ENCODE measurements at regions of chr22 and their contacts with region 1.

Region 1: DNA sequence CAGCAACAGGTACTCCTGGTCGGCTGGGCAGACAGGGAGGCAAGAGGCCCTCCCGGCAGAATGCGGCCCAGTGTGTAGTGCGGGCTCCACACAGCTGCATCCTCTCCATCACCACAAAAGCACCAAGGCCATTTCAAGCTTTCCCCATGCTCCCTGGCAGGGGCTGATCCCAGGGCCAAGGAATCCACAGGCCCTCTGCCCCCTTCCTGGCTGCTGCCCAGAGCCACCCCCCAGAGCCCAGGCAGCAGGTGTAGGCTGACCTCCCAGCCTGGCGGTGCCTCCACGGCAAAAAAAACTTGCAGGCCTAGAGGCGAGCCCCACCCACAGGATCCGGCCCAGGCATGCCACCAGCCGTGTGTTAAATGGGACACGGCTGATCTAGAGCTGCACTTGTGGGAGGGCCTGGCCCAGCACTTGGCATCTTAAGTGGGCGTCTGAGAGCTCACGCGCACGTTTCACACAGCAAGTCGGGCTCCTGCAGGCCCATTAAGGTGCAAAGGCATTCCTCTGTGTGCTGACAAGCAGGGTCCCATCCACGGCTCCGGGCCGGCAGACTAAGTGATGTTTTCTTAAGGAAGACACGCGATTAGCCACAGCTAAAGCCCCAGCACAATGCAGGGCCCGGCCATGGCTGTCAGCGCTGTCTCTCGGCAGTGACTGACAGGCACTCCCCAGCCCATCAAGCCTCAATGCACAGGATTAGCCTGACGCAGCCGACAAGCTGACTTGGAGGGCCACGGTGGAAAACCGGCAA is 19.8 kb upstream of the GNB1L start:
- DNase-seq: peak; percentile 31
- H3K4me3 ChIP-seq: no peak overlapping the region
- H3K27ac ChIP-seq: no peak overlapping the region; a peak in 1 of 4 replicates
- H3K4me1 ChIP-seq: peaks cover 12 to 24% of the 10 kb centered on the region in 2 experiments; a peak in 3 of 4 replicates
- H3K27me3 ChIP-seq: no peaks in the 10 kb centered on the region
- CTCF ChIP-seq: no peak
- EP300 ChIP-seq: no peak
- RAD21 ChIP-seq: no peak

Region 2: DNA sequence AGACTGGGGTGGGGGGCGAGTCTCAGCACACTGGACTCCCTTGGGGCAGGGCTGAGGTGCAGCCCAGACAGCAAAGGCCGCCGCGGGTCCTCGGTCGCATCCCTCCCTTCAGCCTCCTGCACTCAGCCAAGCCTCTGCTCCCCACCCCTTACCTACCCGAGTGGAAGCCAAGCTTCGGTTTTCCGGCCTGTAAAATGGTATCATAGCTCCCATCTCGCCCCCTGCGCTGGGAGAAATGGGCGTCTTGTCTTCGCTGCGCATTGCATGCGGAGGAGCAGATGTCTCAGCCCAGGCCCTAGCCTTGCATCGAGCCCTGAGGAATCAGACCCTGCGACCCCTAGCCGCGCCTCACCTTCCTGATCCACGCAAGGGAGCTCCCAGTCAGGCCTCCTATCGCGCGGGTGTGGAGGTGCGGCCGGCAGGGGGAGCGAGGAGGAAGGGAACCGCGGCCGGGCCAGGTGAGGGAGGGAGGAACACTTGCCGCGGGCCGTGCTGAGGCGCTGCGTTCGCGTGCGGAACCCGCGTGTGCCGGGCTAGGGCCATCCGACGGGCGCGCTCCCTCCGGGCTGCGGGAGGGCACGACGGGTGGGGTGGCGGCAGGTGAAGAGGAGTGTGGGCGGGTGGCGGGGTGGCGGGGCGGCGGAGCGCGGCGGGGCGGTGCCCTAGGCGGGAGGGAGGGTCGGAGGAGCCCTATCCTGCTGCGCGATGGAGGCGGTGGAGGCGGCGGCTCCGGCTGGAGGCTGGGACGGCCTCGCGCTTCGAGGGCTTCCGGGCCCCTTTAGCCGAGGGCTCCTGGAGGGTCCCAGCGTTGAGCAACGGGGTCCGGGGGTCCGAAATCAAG is 118.0 kb before region 1 on chr22:
- CTCF ChIA-PET with region 1: interaction called, 12 read pairs
- POLR2A ChIA-PET with region 1: no interaction called
- DNase-seq: peak; percentile 78
- H3K4me3 ChIP-seq: no peak overlapping the region
- H3K27ac ChIP-seq: no peak overlapping the region
- H3K4me1 ChIP-seq: peaks cover 0 to 6% of the 10 kb centered on the region in 2 experiments; a peak in 2 of 4 replicates
- H3K27me3 ChIP-seq: peaks cover 53% of the 10 kb centered on the region
- CTCF ChIP-seq: peak; percentile 47
- EP300 ChIP-seq: no peak
- RAD21 ChIP-seq: peak; percentile 46

Region 3: DNA sequence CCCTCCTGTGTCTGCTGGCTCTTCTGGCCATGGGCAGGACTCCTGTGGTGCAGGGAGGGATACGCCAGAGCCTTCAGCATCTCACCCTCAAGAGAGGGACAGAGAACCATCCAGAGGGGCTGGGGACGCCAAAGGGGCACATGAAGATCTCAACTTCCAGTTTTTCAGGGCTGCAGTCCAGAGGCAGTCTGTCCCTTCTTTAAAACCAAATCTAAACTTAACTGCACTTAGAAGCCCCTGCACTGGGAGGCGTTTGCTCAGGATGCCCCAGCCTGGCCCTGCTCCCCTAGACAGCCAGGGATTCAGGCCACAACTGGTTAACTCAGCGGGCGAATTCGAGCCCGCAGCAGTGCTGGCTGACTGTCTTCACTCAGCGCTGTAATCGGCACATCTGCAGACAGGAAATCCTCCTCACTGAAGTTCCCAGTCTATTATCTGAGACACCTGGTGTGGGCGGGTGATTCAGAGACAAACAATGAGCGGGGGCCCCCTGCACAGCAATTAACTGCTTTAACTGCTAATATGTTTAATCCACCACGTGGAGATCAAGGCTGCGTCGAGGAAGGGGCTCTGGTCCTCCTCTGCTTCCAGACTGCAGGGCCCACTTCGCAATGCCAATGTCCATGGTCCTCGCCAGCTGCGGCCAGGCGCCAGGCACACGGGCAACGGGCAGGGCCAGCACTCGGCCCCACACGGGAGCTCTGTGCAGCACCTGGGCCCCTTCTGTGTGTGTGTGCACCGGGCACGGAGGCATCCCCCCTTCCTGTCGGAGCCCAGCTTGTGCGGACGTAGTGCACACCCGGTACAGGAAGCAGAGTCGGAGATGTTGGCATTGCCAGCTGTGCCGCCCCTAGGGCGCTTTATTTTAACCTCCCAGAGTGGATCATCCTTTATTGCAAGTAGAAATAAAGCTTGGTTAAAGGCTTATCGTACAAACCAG is 17.1 kb after region 1 on chr22:
- CTCF ChIA-PET with region 1: interaction called, 15 read pairs
- POLR2A ChIA-PET with region 1: no interaction called
- DNase-seq: peak; percentile 89
- H3K4me3 ChIP-seq: no peak overlapping the region
- H3K27ac ChIP-seq: peak overlapping the region; percentile 72 to 98
- H3K4me1 ChIP-seq: peaks cover 42 to 43% of the 10 kb centered on the region in 2 experiments
- H3K27me3 ChIP-seq: no peaks in the 10 kb centered on the region
- CTCF ChIP-seq: no peak
- EP300 ChIP-seq: peak; percentile 74 to 90; a peak in 3 of 4 replicates
- RAD21 ChIP-seq: no peak

Region 4: GRCh38 chr22:20027966-20028854 is 153.7 kb after region 1 on chr22:
- CTCF ChIA-PET with region 1: no interaction called
- POLR2A ChIA-PET with region 1: no interaction called
- DNase-seq: no peak
- H3K4me3 ChIP-seq: no peak overlapping the region
- H3K27ac ChIP-seq: no peak overlapping the region
- H3K4me1 ChIP-seq: peaks cover 0 to 27% of the 10 kb centered on the region in 2 experiments; a peak in 1 of 4 replicates
- H3K27me3 ChIP-seq: no peaks in the 10 kb centered on the region
- CTCF ChIP-seq: peak; percentile 51
- EP300 ChIP-seq: no peak
- RAD21 ChIP-seq: peak; percentile 33

Region 5: GRCh38 chr22:20116951-20117645 is 242.6 kb after region 1 on chr22 and contains the start of gene TRMT2A:
- CTCF ChIA-PET with region 1: no interaction called
- POLR2A ChIA-PET with region 1: no interaction called
- DNase-seq: peak; percentile 99
- H3K4me3 ChIP-seq: peak within 1 kb of the TSS; percentile 78 to 90
- H3K27ac ChIP-seq: peak within 1 kb of the TSS; percentile 60 to 83; a peak in 3 of 4 replicates
- H3K4me1 ChIP-seq: peaks cover 16 to 28% of the 10 kb centered on the region in 2 experiments; a peak in 3 of 4 replicates
- H3K27me3 ChIP-seq: no peaks in the 10 kb centered on the region
- CTCF ChIP-seq: peak; percentile 23; the same call in 1 of the 2 replicates
- EP300 ChIP-seq: 0 out of 4 replicates have a peak, but pooled peaks of 1 of the 2 experiments have one; percentile 44
- RAD21 ChIP-seq: no peak
- polyA plus RNA-seq, gene TRMT2A: 54.6 and 73.1 TPM in 2 replicates

Measured in SK-N-SH (cell line).